AG04449 (cell line): ENCODE measurements at regions of chr2 and their contacts with region 1.

Region 1: GRCh38 chr2:121076885-121077549 is 208.0 kb downstream of the TFCP2L1 start:
- DNase-seq: no peak
- H3K4me3 ChIP-seq: no peak overlapping the region
- CTCF ChIP-seq: peak; percentile 98

Region 2: GRCh38 chr2:120596990-120597594 is 479.9 kb before region 1 on chr2:
- CTCF ChIA-PET with region 1: no interaction called
- POLR2A ChIA-PET with region 1: no interaction called
- DNase-seq: no peak
- H3K4me3 ChIP-seq: no peak overlapping the region
- CTCF ChIP-seq: no peak

Region 3: DNA sequence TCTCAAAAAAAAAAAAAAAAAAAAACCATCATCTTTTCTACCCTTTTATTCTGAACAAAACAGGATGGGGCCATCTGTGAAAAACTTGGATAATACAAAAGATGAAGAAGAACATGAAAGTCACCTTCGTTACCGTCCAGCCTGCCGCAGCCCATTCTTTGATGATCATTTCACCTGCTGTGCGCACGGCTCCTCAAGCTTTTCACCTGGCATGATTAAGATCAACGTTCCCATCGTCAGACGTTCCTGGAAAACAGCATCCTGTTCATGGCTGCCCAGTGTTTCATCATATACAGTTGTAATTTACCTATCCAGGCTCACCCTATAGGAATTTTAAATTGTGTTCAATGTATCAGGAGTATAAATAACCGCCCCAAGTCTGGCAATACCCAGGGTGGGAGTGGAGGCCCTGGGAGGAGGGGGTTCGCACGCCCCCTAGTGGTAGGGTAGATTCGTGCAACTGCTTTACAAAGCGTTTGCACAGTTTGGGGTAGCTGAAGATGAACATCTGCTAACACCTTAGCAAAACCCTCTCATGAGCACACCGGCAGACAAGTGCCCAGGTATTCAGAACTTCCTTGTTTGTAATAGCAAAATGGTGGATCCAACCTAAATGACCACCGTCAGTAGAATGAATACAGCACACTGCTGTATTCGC is 390.4 kb before region 1 on chr2:
- CTCF ChIA-PET with region 1: interaction called, 767 read pairs
- POLR2A ChIA-PET with region 1: interaction called, 17 read pairs
- DNase-seq: no peak
- H3K4me3 ChIP-seq: no peak overlapping the region
- CTCF ChIP-seq: no peak

Region 4: GRCh38 chr2:120712180-120712681 is 364.8 kb before region 1 on chr2:
- CTCF ChIA-PET with region 1: interaction called, 18 read pairs
- POLR2A ChIA-PET with region 1: interaction called, 6 read pairs
- DNase-seq: no peak
- H3K4me3 ChIP-seq: no peak overlapping the region
- CTCF ChIP-seq: no peak

Region 5: DNA sequence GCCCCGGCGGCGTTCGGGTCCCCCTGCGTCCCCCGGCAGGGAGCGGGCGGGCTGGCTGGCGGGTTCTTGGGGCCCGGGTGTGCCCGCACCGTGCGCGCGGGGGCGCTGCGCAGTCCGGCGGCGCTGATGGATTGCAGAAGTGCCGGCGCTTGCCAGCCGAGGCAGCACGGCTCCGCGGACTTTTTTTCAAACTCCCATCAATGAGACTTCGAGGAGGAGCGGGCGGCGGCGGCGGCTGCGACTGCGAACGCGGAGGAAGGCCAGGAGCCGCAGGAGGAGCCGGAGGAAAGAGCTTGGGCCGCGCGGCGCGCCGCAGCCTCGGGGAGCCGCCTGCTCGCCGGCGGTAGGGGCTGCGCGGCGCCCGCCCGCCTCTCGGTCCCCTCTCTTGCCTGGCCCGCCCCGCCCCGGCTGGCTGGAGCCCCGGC is 341.3 kb before region 1 on chr2 and contains the start of gene GLI2:
- CTCF ChIA-PET with region 1: interaction called, 16 read pairs
- POLR2A ChIA-PET with region 1: interaction called, 12 read pairs
- DNase-seq: no peak
- H3K4me3 ChIP-seq: peak within 1 kb of the TSS; percentile 88
- CTCF ChIP-seq: peak; percentile 84

Region 6: DNA sequence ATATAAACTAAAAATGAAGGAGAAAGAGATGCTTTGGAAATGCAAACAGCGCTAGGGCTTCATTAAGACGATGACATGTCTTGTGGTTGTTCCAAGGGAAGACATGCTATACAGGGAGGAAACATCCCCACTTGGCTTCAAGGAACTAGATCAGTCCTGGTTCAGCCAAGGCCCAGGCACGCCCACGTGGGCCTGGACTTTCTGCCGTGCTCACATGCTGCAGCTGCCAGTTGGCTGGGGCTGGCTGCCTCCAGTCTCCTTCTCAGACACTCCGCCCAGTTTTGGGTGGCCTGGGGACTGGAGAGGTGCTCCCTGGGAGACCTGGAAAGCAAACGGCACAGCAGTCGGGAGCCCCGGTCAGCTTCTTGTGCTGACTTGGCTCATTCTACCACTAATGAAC is 231.7 kb before region 1 on chr2:
- CTCF ChIA-PET with region 1: no interaction called
- POLR2A ChIA-PET with region 1: no interaction called
- DNase-seq: no peak
- H3K4me3 ChIP-seq: no peak overlapping the region
- CTCF ChIP-seq: no peak

Region 7: DNA sequence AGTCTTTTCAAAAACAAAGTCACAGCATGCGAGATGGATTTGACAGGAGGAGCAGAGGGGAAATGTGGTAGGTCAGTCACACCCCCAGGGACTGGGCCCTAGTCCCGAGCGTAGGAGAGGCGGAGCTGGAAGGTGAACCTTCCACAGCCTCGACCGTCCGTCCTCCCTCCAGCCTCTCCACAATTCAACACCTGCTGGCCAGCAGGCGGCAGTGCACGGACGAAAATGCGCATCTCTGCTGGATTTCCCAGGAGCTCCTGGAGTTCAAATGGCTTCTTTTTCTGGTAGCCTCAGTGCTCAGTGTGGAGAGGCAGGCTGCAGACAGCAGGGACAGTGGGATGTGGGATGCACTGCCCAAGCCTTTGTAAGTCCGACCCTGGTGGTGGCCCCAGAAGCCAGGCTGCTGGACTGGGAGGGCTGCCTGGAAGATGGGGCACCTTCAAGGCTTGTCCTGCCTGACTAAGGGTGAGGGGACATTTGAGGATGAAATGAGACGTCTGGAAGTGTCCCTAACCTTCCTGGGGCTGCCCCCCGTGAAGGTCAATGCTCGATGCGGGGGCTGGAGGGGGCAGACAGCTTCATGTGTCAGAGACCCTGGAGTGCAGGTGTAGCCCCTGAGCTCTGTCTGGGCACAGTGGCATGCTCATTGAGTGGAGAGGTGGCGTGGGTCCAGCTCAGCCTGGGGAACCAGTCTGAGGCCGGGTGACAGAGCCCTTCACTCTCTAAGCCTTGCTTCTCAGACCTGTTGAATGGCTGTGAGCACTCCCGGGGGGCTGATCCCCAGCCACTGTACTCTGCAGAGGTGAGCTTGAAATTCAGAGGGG is 18.5 kb after region 1 on chr2:
- CTCF ChIA-PET with region 1: interaction called, 146 read pairs
- POLR2A ChIA-PET with region 1: interaction called, 3 read pairs
- DNase-seq: no peak
- H3K4me3 ChIP-seq: no peak overlapping the region
- CTCF ChIP-seq: peak; percentile 88

Region 8: GRCh38 chr2:121220995-121221394 is 144.0 kb after region 1 on chr2:
- CTCF ChIA-PET with region 1: no interaction called
- POLR2A ChIA-PET with region 1: no interaction called
- DNase-seq: no peak
- H3K4me3 ChIP-seq: no peak overlapping the region
- CTCF ChIP-seq: no peak